Mammary epithelial cell (primary cell): ENCODE measurements at regions of chr3 and their contacts with region 1.

Region 1: DNA sequence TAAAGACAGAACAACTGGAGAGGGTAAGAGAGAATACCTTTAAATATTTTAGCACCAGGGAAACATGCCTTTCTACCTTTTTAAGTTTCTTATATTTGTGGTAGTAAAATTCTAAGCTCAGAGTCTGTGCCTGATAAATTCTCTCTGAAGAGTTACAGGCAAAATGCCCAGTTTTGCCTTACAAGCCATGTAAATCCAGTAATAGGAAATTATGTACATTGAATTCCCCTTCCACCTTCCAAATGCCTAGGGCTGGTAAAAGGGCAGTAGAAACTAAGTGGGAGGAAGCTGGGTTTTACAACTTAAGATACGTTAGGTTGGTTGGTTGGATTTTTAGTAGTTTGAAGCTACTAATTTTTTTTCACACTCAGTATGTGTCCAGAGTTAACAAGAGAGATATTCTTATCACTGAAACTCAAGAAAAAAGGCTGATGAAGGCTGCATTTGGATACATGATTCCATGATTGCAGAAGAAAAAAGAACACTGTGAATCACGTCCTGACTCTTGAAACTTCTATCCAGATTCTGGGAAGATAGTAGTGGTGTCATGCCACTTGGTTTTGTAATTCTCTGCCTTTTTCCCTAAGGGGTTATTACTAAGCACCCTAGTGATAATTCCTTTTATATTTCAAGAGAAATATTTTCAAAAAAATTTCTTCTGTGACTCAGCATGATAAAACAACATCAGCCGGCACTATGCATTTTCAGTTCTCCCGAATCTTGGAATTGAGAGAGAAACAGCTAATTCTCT is 42.9 kb upstream of the TP63 start:
- DNase-seq: peak; percentile 90
- H3K4me3 ChIP-seq: peak overlapping the region; percentile 9 to 24 (median 9)
- H3K27ac ChIP-seq: peak overlapping the region; percentile 92
- H3K4me1 ChIP-seq: peaks cover 46% of the 10 kb centered on the region
- H3K27me3 ChIP-seq: no peaks in the 10 kb centered on the region
- CTCF ChIP-seq: no peak

Region 2: DNA sequence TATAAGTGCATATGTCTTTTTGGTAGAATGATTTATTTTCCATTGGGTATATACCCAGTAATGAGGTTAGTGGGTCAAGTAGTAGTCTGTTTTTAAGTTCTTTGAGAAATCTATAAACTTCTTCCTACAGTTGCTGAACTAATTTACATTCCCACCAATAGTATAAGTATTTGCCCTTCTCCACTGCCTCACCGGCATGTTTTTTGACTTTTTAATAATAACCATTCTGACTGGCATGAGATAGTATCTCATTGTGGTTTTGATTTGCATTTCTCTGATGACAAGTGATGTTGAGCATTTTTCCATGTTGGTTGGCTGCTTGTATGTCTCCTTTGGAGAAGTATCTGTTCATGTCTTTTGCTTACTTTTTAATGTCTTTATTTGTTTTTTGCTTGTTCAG is 51.1 kb before region 1 on chr3:
- CTCF ChIA-PET with region 1: no interaction called
- dilution Hi-C with region 1: no loop called
- in situ Hi-C with region 1: no loop called
- intact Hi-C with region 1: no loop called
- DNase-seq: no peak
- H3K4me3 ChIP-seq: no peak overlapping the region
- H3K27ac ChIP-seq: no peak overlapping the region
- H3K4me1 ChIP-seq: no peaks in the 10 kb centered on the region
- H3K27me3 ChIP-seq: peaks cover 3% of the 10 kb centered on the region
- CTCF ChIP-seq: no peak

Region 3: GRCh38 chr3:189563866-189564563 is 24.2 kb before region 1 on chr3:
- CTCF ChIA-PET with region 1: no interaction called
- dilution Hi-C with region 1: no loop called
- in situ Hi-C with region 1: no loop called
- intact Hi-C with region 1: loop called (anchors 1 kb)
- DNase-seq: peak; percentile 98
- H3K4me3 ChIP-seq: no peak overlapping the region
- H3K27ac ChIP-seq: peak overlapping the region; percentile 68
- H3K4me1 ChIP-seq: peaks cover 14% of the 10 kb centered on the region
- H3K27me3 ChIP-seq: no peaks in the 10 kb centered on the region
- CTCF ChIP-seq: peak in 1 of 2 donors; percentile 27

Region 4: DNA sequence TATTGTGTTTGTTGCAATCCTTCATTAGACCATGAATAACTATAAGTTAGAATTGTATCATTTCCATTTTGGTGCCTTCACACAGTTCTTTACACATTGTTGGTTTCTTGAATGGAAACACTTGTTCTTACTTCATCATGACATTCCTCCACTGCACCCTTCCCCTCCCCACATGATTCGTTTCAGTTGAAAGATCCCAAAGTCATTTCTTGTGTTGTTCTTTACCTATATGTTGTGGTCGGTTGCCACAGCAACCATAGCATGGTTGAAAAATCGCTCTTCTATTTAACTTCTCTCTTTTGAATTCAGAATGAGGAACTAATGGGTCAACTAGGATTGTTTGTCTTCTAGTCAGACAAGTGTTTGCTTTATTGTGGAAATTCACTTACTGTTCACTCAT is 1028.9 kb after region 1 on chr3:
- CTCF ChIA-PET with region 1: no interaction called
- dilution Hi-C with region 1: no loop called
- in situ Hi-C with region 1: no loop called
- intact Hi-C with region 1: no loop called
- DNase-seq: no peak
- H3K4me3 ChIP-seq: no peak overlapping the region
- H3K27ac ChIP-seq: peak overlapping the region; percentile 46
- H3K4me1 ChIP-seq: no peaks in the 10 kb centered on the region
- H3K27me3 ChIP-seq: no peaks in the 10 kb centered on the region
- CTCF ChIP-seq: no peak